ENCODE measurements at regions of chr2 and their contacts with region 1.

Region 1: GRCh38 chr2:42663106-42663780 is 94.8 kb downstream of the MTA3 start:
- DNase-seq: peak; percentile 19 to 49
- ATAC-seq: peak; percentile 63 to 93
- H3K4me3 ChIP-seq: no peak overlapping the region
- H3K27ac ChIP-seq: no peak overlapping the region
- H3K4me1 ChIP-seq: no peaks in the 10 kb centered on the region
- H3K27me3 ChIP-seq: no peaks in the 10 kb centered on the region
- CTCF ChIP-seq: peak; percentile 71 to 94 (median 84)
- POLR2A ChIP-seq: no peak

Region 2: GRCh38 chr2:42110641-42111322 is 552.5 kb before region 1 on chr2:
- in situ Hi-C with region 1: no loop called
- intact Hi-C with region 1: no loop called
- DNase-seq: no peak
- ATAC-seq: no peak
- H3K4me3 ChIP-seq: no peak overlapping the region
- H3K27ac ChIP-seq: no peak overlapping the region
- H3K4me1 ChIP-seq: no peaks in the 10 kb centered on the region
- H3K27me3 ChIP-seq: no peaks in the 10 kb centered on the region
- CTCF ChIP-seq: no peak
- POLR2A ChIP-seq: no peak

Region 3: DNA sequence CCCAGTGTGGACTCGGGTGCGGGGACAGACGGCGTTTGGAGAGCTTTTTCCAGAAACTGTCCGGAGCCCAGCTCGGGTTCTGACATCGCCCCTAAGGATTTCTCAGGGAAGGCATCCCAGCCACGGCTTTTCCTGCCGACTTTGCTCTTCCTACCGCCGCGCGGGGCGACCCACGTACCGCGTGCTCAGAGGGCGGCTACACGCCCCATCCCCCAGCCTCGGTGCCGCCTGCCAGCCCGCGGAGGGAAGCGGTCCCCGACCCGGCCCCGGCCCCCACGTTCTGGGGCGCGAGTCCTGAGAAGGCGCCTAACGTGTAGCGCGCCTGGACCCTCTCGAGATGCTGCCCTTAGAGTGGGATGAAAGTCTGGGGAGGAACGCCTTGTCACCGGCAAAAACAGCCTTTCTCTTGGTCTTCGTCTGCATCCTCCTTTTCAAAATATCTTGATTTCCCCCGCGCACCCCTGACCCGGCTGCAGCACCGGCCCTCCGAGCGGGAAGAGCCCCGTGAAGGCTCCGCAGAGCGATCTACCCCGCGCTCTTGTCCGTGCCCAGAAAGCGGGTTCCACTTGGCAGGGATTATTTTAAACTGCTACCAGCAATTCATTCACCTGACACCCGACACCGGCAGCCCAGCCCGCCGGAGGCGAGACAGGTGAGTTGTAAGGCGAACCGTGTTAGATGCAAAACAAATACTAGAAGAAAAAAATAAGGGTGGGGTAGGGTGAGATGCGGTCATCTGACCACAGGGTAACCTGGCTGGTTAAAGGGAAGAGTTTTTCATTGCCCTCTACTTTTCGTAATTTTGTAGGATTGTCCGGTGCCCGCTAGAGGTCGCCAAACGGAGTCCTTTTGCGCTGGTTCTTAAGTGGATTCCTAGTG is 168.6 kb before region 1 on chr2:
- in situ Hi-C with region 1: loop called in 1 of 4 experiments (anchors 5 kb)
- intact Hi-C with region 1: loop called (anchors 1 kb)
- DNase-seq: peak; percentile 12 to 42
- ATAC-seq: peak; percentile 70 to 83
- H3K4me3 ChIP-seq: peak overlapping the region; percentile 55 to 64 (median 58)
- H3K27ac ChIP-seq: no peak overlapping the region
- H3K4me1 ChIP-seq: peaks cover 0 to 6% of the 10 kb centered on the region in 2 donors
- H3K27me3 ChIP-seq: peaks cover 22 to 30% (median 23%) of the 10 kb centered on the region in 3 donors
- CTCF ChIP-seq: peak; percentile 38 to 86 (median 66)
- POLR2A ChIP-seq: no peak

Region 4: DNA sequence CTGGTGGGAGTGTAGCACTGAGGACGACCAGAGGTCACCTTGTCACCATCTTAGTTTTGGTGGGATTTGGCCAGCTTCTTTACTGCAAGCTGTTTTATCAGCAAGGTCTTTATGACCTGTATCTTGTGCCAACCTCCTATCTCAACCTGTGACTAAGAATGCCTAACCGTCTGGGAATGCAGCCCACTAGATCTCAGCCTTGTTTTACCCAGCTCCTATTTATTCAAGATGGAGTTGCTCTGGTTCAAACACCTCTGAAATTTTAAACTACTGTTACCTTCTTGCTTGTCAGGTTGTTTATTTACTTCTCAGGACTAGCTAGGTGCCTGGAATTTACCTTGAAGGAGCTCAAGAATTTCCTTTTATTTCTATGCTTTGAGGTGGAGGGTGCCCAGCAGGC is 160.0 kb before region 1 on chr2:
- in situ Hi-C with region 1: loop called in 3 of 4 experiments (anchors 5 to 10 kb)
- intact Hi-C with region 1: no loop called
- DNase-seq: no peak
- ATAC-seq: no peak
- H3K4me3 ChIP-seq: no peak overlapping the region
- H3K27ac ChIP-seq: no peak overlapping the region
- H3K4me1 ChIP-seq: no peaks in the 10 kb centered on the region
- H3K27me3 ChIP-seq: no peaks in the 10 kb centered on the region
- CTCF ChIP-seq: no peak
- POLR2A ChIP-seq: no peak

Region 5: DNA sequence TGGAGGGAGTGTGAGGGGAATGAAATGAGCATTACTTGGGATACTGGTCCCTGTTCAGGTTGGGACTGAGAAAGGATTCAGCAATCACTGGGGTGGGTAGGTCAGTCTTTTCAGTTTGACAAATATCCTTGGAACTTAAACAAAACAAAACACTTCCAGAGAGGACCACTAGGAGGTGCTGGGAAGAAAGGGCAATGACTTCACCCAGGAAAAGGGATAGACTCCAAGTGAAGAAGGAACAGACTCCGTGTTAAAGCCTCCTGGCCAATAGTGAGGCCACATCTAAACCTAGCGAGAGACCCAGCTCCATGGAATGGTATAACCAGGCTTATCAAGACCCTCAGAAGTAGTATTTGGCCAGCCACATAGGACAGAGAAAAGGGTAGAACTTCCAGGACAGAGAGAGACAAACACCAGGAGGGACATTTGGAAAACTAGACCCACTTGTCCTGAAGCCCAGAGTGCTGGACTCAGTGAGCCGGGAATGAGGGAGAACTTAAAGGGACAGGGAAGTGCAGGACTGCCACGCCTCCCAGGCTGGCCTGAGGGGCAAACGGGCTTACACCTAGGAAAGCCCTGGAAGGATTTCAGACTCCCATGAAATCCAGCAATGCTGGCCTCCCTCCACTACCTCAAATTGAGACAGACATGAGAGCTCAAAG is 149.9 kb before region 1 on chr2:
- in situ Hi-C with region 1: loop called in 2 of 4 experiments (anchors 5 to 10 kb)
- intact Hi-C with region 1: loop called (anchors 1 kb)
- DNase-seq: no peak
- ATAC-seq: peak in 1 of 2 donors; percentile 61
- H3K4me3 ChIP-seq: no peak overlapping the region
- H3K27ac ChIP-seq: no peak overlapping the region
- H3K4me1 ChIP-seq: no peaks in the 10 kb centered on the region
- H3K27me3 ChIP-seq: no peaks in the 10 kb centered on the region
- CTCF ChIP-seq: peak in 4 of 5 experiments; percentile 26 to 56 (median 42)
- POLR2A ChIP-seq: no peak

Region 6: DNA sequence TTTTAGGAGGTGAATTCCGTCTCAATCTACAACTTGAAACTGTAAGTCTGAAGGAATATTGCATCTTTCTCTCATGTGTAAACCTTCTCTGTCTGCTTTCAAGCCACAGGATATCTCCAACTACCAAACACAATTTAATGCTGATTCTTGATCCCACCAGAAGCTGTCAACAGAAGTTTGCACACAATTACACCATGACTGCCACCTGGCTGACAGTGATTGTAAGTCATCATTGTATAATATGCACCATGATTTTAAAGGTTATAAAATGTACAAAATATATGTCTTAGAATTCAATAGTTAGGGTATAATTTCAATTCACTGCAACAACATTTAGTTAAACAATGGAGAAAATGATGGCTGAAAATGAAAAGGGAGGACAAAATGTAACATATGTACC is 1679.6 kb after region 1 on chr2:
- in situ Hi-C with region 1: no loop called
- intact Hi-C with region 1: no loop called
- DNase-seq: no peak
- ATAC-seq: peak in 1 of 2 donors; percentile 44
- H3K4me3 ChIP-seq: no peak overlapping the region
- H3K27ac ChIP-seq: no peak overlapping the region
- H3K4me1 ChIP-seq: peaks cover 4 to 7% of the 10 kb centered on the region in 2 donors
- H3K27me3 ChIP-seq: no peaks in the 10 kb centered on the region
- CTCF ChIP-seq: peak in 3 of 5 experiments; percentile 20 to 29 (median 27)
- POLR2A ChIP-seq: no peak

Measured in gastrocnemius medialis (tissue), 4 donors.